ENCODE measurements at regions of chr11 and their contacts with region 1.

Region 1: DNA sequence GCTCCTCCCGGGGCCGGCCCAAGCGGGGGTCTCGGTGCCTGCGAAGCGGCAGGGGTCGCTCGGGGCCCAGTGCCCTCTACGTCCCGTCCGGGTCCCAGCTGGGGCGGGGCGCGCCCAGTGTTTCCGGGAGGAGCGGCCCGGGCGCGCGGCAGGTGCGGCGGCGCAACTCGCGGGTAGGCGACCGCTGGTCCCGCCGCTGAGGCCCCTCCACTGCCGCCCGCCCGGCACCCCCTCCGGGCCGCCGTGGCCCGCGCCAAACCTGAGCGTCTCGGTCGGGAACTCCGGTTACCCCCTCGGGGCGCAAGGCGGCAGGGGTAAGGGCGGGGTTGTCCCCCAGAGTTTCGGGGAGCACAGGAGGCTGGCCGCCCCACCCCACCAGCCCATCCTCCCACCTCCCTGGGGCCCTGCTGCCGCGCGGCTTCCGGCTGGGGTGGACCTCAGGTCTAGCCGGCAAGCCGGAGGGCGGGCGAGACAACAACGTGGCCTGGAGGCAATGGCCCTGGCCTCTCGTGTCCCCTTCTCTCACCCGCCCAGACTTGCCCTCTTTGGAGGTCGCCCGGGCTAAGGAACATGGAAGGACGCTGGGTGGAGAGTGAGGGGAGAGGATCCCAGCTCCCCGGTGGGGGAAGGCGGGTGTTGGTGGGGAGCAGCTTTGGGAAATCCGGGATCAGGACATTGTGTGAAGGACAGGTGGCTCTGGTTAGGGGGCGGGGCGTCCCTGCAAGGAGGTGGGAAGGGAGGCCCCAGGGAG is 398 bp upstream of the CRACR2B start:
- DNase-seq: peak in 1 of 9 donors; percentile 55
- ATAC-seq: peak; percentile 10
- H3K4me3 ChIP-seq: peak overlapping the region; percentile 37
- H3K4me3 Mint-ChIP-seq: peak overlapping the region; percentile 4 to 83 (median 72)
- H3K27ac ChIP-seq: no peak overlapping the region
- H3K27ac Mint-ChIP-seq: no peak overlapping the region
- H3K4me1 ChIP-seq: peaks cover 14 to 45% of the 10 kb centered on the region in 2 donors
- H3K4me1 Mint-ChIP-seq: peaks cover 0 to 31% (median 29%) of the 10 kb centered on the region in 7 donors
- H3K27me3 ChIP-seq: peaks cover 0 to 11% of the 10 kb centered on the region in 2 donors
- H3K27me3 Mint-ChIP-seq: peaks cover 14 to 44% (median 20%) of the 10 kb centered on the region in 5 donors

Region 2: DNA sequence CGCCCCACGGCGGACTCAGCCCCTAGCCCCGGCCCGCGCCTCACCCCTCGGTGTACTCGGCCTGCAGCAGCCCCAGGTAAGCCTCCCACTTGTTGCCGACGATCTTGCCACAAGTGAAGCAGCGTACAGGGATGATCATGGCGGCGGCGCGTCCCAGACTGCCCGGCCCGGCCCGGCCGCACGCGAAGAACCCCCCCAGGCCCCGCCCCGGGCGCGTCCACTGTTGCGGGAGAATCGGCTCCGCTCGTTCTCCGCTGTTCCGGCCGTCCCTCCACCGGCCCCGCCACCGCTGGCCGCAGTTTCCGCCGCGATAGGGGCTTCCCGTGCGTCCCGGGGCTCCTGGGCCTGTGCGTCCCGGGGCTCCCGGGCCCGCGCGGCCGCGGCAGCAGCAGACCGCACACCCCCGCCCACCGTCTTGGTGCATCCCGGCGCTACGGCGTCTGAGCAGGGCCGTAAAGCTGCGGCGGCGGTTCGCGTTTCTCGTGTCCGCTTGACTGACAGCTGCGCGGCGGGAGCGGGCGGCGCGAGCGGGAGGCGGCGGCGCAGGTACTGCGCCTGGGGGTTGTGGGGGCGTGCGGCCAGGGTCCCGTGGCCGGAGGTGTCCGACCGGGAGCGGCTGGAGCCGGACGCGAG is 15.2 kb after region 1 on chr11 and contains the starts of genes POLR2L and TSPAN4:
- CTCF ChIA-PET with region 1: no interaction called
- POLR2A ChIA-PET with region 1: interaction called, 32 read pairs
- intact Hi-C with region 1: loop called (anchors 1 to 2 kb)
- DNase-seq: peak; percentile 76 to 97 (median 81)
- ATAC-seq: peak; percentile 86
- H3K4me3 ChIP-seq: peak within 1 kb of the TSS; percentile 83
- H3K4me3 Mint-ChIP-seq: peak within 1 kb of the TSS; percentile 74 to 89 (median 86)
- H3K27ac ChIP-seq: peak within 1 kb of the TSS; percentile 89
- H3K27ac Mint-ChIP-seq: peak within 1 kb of the TSS; percentile 28 to 89 (median 70)
- H3K4me1 ChIP-seq: peaks cover 16 to 21% of the 10 kb centered on the region in 2 donors
- H3K4me1 Mint-ChIP-seq: peaks cover 5 to 36% (median 18%) of the 10 kb centered on the region in 7 donors
- H3K27me3 ChIP-seq: no peaks in the 10 kb centered on the region
- H3K27me3 Mint-ChIP-seq: peaks cover 0 to 2% (median 0%) of the 10 kb centered on the region in 5 donors
- total RNA-seq, gene POLR2L: 31.2 to 93.3 (median 44.9) TPM
- total RNA-seq, gene TSPAN4: 4.8 to 12.6 (median 6.6) TPM

Measured in naive thymus-derived CD4-positive, alpha-beta T cell (primary cell).